ENCODE measurements at regions of chr1 and their contacts with region 1.

Region 1: DNA sequence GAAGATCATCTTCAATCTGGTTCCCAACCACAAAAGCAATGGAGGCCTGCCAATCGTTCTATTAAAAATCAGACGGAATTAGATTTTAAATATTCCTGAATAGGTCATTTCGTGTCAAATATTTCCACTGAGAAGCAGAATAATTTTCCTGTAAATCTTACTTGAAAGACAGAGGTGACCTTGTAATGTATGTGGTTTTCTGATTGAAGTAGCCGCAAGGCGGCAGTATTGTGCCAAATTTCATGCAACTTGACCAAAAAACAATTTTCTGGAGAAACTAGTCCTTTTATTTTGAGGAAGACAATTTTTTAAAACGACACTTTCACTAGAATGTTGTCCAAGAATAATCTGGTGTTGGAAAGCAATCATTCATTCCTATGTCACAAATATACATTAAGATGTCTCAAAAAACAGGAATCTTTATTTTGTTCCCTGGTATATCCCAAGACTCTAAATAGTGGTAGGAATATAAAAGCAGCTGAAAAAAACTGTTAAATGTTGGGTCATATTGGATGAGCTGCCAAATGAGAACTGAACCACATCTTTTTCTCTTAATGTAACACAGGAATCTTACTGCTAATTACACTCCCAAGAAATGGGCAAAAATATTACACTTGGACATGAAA is 33.6 kb downstream of the SPAG17 start:
- DNase-seq: peak; percentile 11 to 26 (median 15)
- H3K4me3 ChIP-seq: no peak overlapping the region
- H3K4me3 Mint-ChIP-seq: no peak overlapping the region
- H3K27ac ChIP-seq: no peak overlapping the region
- H3K27ac Mint-ChIP-seq: no peak overlapping the region
- H3K4me1 ChIP-seq: no peaks in the 10 kb centered on the region
- H3K4me1 Mint-ChIP-seq: no peaks in the 10 kb centered on the region
- H3K27me3 ChIP-seq: no peaks in the 10 kb centered on the region
- H3K27me3 Mint-ChIP-seq: peaks cover 2 to 7% (median 4%) of the 10 kb centered on the region in 3 donors
- CTCF ChIP-seq: peak; percentile 78

Region 2: GRCh38 chr1:118021668-118022067 is 129.8 kb before region 1 on chr1:
- intact Hi-C with region 1: loop called in 1 of 2 experiments (anchors 10 kb)
- DNase-seq: peak; percentile 6 to 39 (median 15)
- H3K4me3 ChIP-seq: no peak overlapping the region
- H3K4me3 Mint-ChIP-seq: no peak overlapping the region
- H3K27ac ChIP-seq: no peak overlapping the region
- H3K27ac Mint-ChIP-seq: no peak overlapping the region
- H3K4me1 ChIP-seq: no peaks in the 10 kb centered on the region
- H3K4me1 Mint-ChIP-seq: peaks cover 15% of the 10 kb centered on the region
- H3K27me3 ChIP-seq: no peaks in the 10 kb centered on the region
- H3K27me3 Mint-ChIP-seq: peaks cover 2 to 6% (median 3%) of the 10 kb centered on the region in 3 donors
- CTCF ChIP-seq: peak; percentile 24

Measured in CD14-positive monocyte (primary cell).